ENCODE measurements at regions of chr4 and their contacts with region 1.

Region 1: GRCh38 chr4:102586644-102587021 is 85.5 kb downstream of the NFKB1 start:
- DNase-seq: peak in 7 of 9 donors; percentile 10 to 56 (median 37)
- ATAC-seq: peak; percentile 74
- H3K4me3 ChIP-seq: peak overlapping the region; percentile 3
- H3K4me3 Mint-ChIP-seq: peak overlapping the region; percentile 25 to 78 (median 62)
- H3K27ac ChIP-seq: peak overlapping the region; percentile 58
- H3K27ac Mint-ChIP-seq: peak overlapping the region; percentile 68 to 93 (median 84)
- H3K4me1 ChIP-seq: peaks cover 48 to 61% of the 10 kb centered on the region in 2 donors
- H3K4me1 Mint-ChIP-seq: peaks cover 39 to 91% (median 84%) of the 10 kb centered on the region in 7 donors
- H3K27me3 ChIP-seq: no peaks in the 10 kb centered on the region
- H3K27me3 Mint-ChIP-seq: no peaks in the 10 kb centered on the region

Region 2: GRCh38 chr4:102598086-102598761 is 11.6 kb after region 1 on chr4:
- CTCF ChIA-PET with region 1: no interaction called
- POLR2A ChIA-PET with region 1: interaction called, 5 read pairs
- intact Hi-C with region 1: loop called (anchors 1 kb)
- DNase-seq: peak in 7 of 9 donors; percentile 56 to 87 (median 79)
- ATAC-seq: peak; percentile 95
- H3K4me3 ChIP-seq: no peak overlapping the region
- H3K4me3 Mint-ChIP-seq: peak overlapping the region; percentile 8 to 86 (median 54)
- H3K27ac ChIP-seq: peak overlapping the region; percentile 51
- H3K27ac Mint-ChIP-seq: peak overlapping the region; percentile 78 to 94 (median 86)
- H3K4me1 ChIP-seq: peaks cover 27 to 45% of the 10 kb centered on the region in 2 donors
- H3K4me1 Mint-ChIP-seq: peaks cover 31 to 86% (median 74%) of the 10 kb centered on the region in 7 donors
- H3K27me3 ChIP-seq: no peaks in the 10 kb centered on the region
- H3K27me3 Mint-ChIP-seq: no peaks in the 10 kb centered on the region

Region 3: DNA sequence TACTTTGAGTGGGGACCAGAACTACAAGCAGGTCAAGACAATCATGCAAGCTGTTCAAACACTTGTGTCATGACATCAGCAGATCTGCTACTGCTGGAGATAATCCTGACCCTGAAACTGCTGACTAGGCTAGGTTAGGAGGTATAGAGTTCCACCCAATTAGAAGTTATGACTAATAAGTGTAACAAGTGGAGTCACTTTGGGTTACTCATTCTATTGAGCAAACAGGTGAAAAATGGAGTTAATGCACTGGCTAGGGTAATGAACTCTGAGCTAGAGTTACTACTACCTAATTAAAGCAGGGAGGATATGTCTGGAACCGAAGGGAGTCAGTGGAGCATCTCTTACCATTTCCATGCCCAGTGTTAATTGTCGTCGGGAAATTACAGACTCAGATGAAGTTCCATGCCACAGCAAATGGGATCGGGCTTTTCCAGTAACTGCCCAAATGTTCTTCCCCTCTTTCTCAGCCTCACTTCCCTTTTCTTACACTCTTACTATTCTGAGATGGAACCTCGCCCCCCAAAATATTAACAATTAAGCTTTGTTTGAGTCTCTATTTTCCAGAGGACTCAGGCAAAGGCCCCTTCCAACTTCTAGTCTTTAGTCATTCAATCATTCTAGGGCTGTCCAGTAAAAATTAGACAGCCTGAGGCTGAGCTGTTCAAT is 194.0 kb after region 1 on chr4:
- CTCF ChIA-PET with region 1: no interaction called
- POLR2A ChIA-PET with region 1: no interaction called
- intact Hi-C with region 1: no loop called
- DNase-seq: no peak
- ATAC-seq: peak; percentile 69
- H3K4me3 ChIP-seq: no peak overlapping the region
- H3K4me3 Mint-ChIP-seq: no peak overlapping the region
- H3K27ac ChIP-seq: no peak overlapping the region
- H3K27ac Mint-ChIP-seq: no peak overlapping the region
- H3K4me1 ChIP-seq: no peaks in the 10 kb centered on the region
- H3K4me1 Mint-ChIP-seq: no peaks in the 10 kb centered on the region
- H3K27me3 ChIP-seq: no peaks in the 10 kb centered on the region
- H3K27me3 Mint-ChIP-seq: peaks cover 0 to 15% (median 4%) of the 10 kb centered on the region in 5 donors

Measured in naive thymus-derived CD4-positive, alpha-beta T cell (primary cell).